ENCODE measurements at regions of chr20 and their contacts with region 1.

Region 1: DNA sequence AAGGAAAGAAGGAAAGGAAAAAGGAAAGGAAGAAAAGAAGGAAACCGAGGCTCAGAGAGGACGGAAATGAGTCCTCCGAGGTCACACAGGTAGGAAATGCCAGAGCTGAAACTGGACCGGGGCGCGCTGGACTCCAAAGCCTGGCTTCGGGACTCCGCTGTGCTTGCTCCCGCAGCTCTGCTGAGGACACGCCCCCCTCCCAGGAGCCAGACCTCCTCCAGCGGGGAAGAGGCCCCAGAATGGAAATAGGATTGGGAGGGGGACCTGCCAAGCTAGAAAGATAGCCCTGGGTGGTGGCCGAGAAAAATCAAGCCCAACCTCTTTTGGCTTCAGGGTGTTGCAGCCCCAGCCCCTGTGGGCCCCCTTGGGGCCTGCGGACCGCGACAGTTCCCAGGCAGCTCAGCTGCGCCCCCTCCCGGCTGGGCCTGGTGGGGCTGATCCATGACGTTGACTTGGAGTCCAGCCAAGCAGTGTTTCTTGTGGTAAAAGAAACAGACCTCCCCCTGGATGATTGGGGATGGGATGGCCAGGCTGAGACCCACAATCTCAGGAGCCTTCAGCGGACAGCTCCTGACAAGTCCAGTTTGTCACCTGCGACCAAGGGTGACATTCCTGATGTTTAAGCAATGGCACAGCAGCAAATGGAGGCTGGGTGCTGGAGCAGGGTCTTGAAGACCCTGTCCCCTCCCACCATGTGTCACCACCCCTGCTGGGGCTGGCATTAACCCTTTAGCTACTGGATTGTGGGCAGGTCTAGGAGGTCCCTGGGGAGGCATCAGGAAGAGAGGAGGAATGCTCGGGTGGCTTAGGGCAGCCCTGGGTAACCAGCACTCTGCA is 55.5 kb downstream of the RIPOR3 start:
- DNase-seq: peak; percentile 74 to 92
- H3K4me3 ChIP-seq: peak overlapping the region; percentile 42; the same call in 1 of the 2 replicates
- H3K27ac ChIP-seq: no peak overlapping the region
- H3K4me1 ChIP-seq: peaks cover 36% of the 10 kb centered on the region
- H3K27me3 ChIP-seq: no peaks in the 10 kb centered on the region
- CTCF ChIP-seq: peak; percentile 99

Region 2: GRCh38 chr20:50415516-50416113 is 220.3 kb before region 1 on chr20:
- CTCF ChIA-PET with region 1: no interaction called
- POLR2A ChIA-PET with region 1: no interaction called
- intact Hi-C with region 1: no loop called
- DNase-seq: peak; percentile 85 to 97
- H3K4me3 ChIP-seq: peak overlapping the region; percentile 27; the same call in 1 of the 2 replicates
- H3K27ac ChIP-seq: peak overlapping the region; percentile 90
- H3K4me1 ChIP-seq: peaks cover 64% of the 10 kb centered on the region
- H3K27me3 ChIP-seq: no peaks in the 10 kb centered on the region
- CTCF ChIP-seq: no peak; the same call in 1 of the 2 replicates

Region 3: DNA sequence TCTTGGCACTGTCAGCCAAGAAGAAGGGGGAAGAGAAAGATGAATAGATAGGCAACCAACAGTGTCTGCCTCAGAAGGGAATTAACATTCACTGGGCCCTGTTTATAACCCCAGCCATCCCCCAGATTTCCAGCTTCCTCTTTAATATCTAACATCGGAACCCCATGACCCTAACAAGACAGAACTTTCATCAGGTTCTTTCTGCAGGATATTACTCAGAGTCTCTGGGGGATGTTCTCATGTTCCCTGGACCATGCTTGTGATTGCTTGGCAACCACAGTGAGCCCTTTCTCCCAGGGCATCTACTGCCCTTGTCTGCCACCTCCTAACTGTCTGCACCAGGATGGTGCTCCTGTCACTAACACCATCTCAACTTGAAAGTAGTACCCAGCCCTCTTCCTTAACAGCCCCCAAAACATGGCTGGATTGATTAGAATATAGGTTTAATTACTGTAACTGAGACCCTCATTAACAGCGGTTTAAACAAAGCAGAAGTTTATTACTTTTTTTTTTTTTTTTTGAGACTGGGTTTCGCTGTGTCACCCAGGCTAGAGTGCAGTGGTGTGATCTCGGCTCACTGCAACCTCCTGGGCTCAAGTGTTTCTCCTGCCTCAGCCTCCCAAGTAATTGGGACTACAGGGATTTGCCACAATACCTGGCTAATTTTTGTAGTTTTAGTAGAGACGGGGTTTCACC is 137.7 kb before region 1 on chr20:
- CTCF ChIA-PET with region 1: no interaction called
- POLR2A ChIA-PET with region 1: interaction called, 24 read pairs
- intact Hi-C with region 1: no loop called
- DNase-seq: no peak
- H3K4me3 ChIP-seq: no peak overlapping the region
- H3K27ac ChIP-seq: no peak overlapping the region
- H3K4me1 ChIP-seq: peaks cover 22% of the 10 kb centered on the region
- H3K27me3 ChIP-seq: no peaks in the 10 kb centered on the region
- CTCF ChIP-seq: no peak

Region 4: GRCh38 chr20:50704528-50704927 is 68.6 kb after region 1 on chr20:
- CTCF ChIA-PET with region 1: no interaction called
- POLR2A ChIA-PET with region 1: interaction called, 16 read pairs
- intact Hi-C with region 1: no loop called
- DNase-seq: no peak
- H3K4me3 ChIP-seq: no peak overlapping the region
- H3K27ac ChIP-seq: no peak overlapping the region
- H3K4me1 ChIP-seq: peaks cover 25% of the 10 kb centered on the region
- H3K27me3 ChIP-seq: no peaks in the 10 kb centered on the region
- CTCF ChIP-seq: no peak